Activated CD4-positive, alpha-beta memory T cell treated with anti-CD3 and anti-CD28 coated beads for 36 hours (primary cell): ENCODE measurements at regions of chr1 and their contacts with region 1.

Region 1: GRCh38 chr1:44036409-44037139 is 5.3 kb upstream of the SLC6A9 start:
- DNase-seq: peak; percentile 81
- H3K4me3 Mint-ChIP-seq: no peak overlapping the region
- H3K27ac Mint-ChIP-seq: no peak overlapping the region
- H3K4me1 Mint-ChIP-seq: peaks cover 2% of the 10 kb centered on the region
- H3K27me3 Mint-ChIP-seq: no peaks in the 10 kb centered on the region

Region 2: GRCh38 chr1:43763497-43763973 is 273.0 kb before region 1 on chr1:
- CTCF ChIA-PET with region 1: interaction called, 22 read pairs
- POLR2A ChIA-PET with region 1: no interaction called
- intact Hi-C with region 1: no loop called
- DNase-seq: peak; percentile 53
- H3K4me3 Mint-ChIP-seq: no peak overlapping the region
- H3K27ac Mint-ChIP-seq: no peak overlapping the region
- H3K4me1 Mint-ChIP-seq: no peaks in the 10 kb centered on the region
- H3K27me3 Mint-ChIP-seq: no peaks in the 10 kb centered on the region

Region 3: GRCh38 chr1:43991476-43992231 is 44.9 kb before region 1 on chr1 and contains the start of gene CCDC24:
- CTCF ChIA-PET with region 1: interaction called, 16 read pairs
- POLR2A ChIA-PET with region 1: no interaction called
- intact Hi-C with region 1: loop called (anchors 5 kb)
- DNase-seq: peak; percentile 84
- H3K4me3 Mint-ChIP-seq: peak within 1 kb of the TSS; percentile 86
- H3K27ac Mint-ChIP-seq: peak within 1 kb of the TSS; percentile 56
- H3K4me1 Mint-ChIP-seq: peaks cover 11% of the 10 kb centered on the region
- H3K27me3 Mint-ChIP-seq: no peaks in the 10 kb centered on the region
- total RNA-seq, gene CCDC24: 2.7 to 2.8 TPM

Region 4: DNA sequence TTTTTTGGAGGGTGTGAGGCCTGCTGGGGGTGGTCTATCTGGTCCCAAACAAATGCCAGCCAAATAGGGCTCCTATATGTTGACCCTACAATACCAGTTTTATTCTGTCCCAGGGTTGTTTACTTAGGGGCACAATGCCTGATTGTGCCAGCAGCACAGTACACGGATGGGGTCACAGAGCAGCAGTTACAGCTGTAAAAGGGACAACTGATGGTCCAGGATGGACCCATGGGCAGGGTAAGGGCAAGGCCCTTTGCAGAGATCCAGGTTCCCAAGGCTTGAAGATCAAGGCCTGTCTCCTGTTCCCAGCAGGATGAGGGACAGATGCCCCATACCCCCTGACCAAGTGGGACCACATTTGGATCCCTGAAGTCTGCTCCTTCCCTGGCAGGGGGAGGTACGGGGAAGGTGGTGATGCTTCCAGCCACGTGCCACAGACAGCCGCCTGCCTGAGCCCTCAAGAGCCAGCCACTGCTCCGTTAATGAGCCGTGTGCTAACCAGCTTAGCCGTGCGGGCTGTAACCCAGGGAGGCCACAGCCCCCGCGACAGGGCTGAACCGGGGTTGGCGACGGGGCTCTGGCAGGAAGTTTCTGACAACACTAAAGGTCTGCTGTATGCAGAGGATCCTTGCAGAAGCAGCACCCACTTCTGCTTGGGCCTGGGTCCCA is 23.5 kb before region 1 on chr1:
- CTCF ChIA-PET with region 1: interaction called, 12 read pairs
- POLR2A ChIA-PET with region 1: no interaction called
- intact Hi-C with region 1: no loop called
- DNase-seq: no peak
- H3K4me3 Mint-ChIP-seq: no peak overlapping the region
- H3K27ac Mint-ChIP-seq: no peak overlapping the region
- H3K4me1 Mint-ChIP-seq: no peaks in the 10 kb centered on the region
- H3K27me3 Mint-ChIP-seq: no peaks in the 10 kb centered on the region